ENCODE measurements at regions of chr1 and their contacts with region 1.

Region 1: DNA sequence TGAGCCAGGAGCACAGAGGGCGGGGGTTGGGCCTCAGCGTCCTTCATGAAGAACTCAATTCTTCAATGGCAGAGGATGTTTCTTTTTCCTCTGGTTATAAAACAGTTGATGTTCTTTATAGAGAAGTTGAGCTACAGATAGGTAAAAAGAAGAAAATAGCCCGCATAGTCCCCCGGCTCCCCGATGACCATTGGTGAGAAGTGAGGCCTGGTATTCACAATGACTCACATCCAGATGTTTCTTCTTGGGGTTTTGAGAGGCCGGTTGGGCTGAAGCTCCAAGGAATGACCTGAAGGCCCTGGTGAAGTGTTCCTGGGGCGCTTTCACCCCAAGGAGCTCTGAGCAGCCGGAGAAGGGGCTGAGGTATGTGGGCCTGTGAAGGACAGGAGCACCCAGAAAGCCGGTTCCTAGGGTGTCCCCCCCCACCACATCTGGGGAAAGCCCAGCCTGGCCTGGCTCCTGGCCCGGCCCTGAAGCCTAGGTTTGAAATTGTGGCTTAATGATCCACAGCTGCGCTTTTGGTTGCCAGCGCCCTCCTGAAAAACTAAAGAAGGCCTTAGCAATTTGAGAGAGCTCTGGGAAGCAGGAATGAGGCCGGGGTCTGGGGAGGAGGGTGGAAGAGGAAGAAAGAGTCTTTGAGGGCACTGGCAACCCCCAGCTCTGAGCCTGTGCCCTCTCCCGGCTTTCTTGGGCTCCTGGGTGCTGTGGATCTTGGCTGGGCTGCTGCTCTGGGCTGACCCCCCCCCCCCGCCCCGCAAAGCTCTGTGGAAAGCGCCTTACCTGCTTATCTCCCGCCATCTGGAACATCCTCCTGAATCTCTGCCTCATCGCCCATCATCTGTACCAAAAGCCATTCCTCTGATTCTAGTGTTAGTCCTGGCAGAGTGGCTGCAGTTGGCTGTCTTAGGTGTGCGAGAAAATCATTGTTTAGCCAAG is 444.7 kb downstream of the CAMTA1 start:
- DNase-seq: no peak
- ATAC-seq: no peak
- H3K4me3 ChIP-seq: no peak overlapping the region
- H3K27ac ChIP-seq: no peak overlapping the region
- H3K4me1 ChIP-seq: no peaks in the 10 kb centered on the region
- H3K27me3 ChIP-seq: peaks cover 0 to 10% (median 0%) of the 10 kb centered on the region in 7 donors
- CTCF ChIP-seq: no peak

Region 2: DNA sequence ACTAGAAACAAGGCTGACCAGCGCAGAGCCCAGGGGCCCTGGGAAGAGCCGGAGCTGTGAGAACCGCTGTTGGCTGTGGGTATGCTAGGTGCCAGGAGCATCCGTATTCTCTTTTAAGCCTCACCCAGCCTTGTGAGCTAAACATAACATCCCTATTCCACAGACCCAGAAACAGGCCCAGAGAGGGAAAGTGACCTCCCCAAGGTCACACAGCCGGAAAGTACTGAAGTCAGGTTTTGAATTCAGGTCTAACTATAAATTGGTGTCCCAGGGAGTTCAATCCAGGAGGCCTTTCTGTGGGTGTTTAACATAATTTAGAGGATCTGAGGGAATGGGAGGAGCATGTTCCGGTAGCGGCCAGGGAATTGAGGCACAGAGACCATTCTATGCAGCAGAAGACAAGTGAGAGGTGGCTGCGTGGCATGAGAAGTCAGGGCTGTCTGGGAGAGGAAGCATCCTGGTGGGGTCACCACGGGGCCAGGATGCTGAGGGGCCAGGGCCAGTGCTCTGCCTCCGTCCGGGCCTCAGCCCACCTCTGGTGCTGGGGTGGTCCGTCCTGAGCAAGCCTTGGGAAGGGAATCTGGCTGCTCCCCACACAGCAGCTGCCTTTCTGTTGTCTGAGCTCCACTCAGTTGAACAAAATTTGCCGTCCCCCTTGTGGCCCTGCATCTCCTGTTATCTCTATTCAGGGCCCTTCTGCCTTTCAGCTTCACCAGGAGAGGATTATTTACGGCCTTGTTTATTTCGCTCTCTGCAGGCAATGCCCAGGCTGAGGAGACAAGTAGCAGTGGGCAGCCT is 202.3 kb after region 1 on chr1:
- intact Hi-C with region 1: loop called in 1 of 10 experiments (anchors 10 kb)
- DNase-seq: no peak
- ATAC-seq: no peak
- H3K4me3 ChIP-seq: no peak overlapping the region
- H3K27ac ChIP-seq: no peak overlapping the region
- H3K4me1 ChIP-seq: no peaks in the 10 kb centered on the region
- H3K27me3 ChIP-seq: peaks cover 0 to 4% (median 0%) of the 10 kb centered on the region in 7 donors
- CTCF ChIP-seq: no peak

Measured in heart right ventricle (tissue), 16 donors.